GM18951 (cell line): ENCODE measurements at regions of chr11 and their contacts with region 1.

Region 1: GRCh38 chr11:102346748-102347461 is at the start of gene BIRC2:
- POLR2A ChIP-seq: peak; percentile 81

Region 2: DNA sequence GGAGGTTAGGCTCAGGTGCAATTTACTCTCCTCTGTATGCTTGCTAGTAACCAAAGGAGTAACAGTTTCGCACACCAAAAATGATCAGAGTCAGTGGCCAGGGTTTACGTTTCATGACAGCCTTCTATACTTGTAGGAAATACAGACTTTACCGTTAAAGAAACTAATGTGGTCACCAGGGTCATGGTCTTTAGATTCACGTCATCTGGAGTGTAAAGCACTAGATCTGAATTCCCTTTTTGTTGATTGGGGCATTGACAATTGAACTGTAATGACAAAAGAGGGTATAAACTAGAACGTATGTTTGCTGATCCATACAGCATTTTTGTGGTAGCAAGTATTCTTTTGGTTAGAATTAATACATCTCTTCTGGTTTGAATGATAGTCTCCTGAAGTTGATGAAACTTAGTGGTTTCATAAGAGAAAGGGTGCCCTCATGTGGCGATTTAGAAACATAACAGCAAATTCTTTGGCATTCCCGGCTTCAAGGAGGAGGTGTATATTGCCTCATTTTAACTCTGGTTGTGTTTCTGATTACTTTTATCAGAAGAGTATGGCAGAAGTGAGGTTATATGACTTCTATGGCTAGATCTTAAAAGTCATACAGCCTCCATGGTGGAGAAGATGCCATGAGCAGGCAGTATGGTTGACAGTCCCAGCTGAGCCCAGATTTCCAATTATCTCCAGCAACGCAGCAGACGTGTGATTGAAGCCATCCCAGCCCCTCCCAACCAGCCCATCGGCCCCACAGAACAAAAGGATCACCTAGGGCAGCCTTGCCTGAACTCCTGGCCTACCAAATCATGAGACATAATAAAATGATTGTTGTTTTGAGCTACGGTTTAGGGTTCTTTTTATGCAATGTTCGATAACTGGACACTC is 148.5 kb after region 1 on chr11:
- in situ Hi-C with region 1: loop called (anchors 10 kb)
- POLR2A ChIP-seq: no peak

Region 3: DNA sequence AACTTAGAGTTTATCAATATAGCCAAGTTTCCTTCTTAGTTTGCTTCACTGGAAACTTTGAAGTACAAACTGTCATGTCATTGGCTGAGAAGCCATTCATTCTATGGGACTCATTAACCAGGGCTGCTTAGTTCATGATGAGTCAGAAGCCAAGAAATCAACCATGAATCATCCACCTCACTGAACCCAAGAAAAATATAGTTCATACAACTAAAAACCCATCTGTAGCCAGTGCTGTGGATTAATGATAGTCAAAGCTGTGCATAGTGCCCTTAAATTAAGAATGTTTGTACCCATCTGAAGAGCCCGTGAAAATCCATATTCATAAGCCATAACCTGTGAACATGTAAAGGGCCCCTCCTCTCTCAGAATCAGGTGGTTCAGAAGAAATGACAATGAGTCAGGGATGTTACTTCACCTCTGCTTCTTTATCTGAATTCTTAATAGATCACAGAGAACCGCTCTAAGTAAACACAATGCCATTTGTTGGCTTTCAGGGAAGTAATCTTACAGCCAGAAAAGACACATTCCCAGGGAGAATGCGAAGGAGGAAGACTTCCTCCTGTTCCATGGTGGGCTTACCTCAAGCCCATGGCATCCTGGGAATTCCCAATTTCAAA is 252.8 kb after region 1 on chr11:
- in situ Hi-C with region 1: loop called (anchors 10 kb)
- POLR2A ChIP-seq: no peak

Region 4: GRCh38 chr11:103619480-103619879 is 1272.6 kb after region 1 on chr11:
- in situ Hi-C with region 1: no loop called
- POLR2A ChIP-seq: no peak